ENCODE measurements at regions of chr4 and their contacts with region 1.

Region 1: GRCh38 chr4:73258686-73259570 is at the start of gene ANKRD17:
- DNase-seq: peak; percentile 89 to 91
- H3K4me3 ChIP-seq: peak within 1 kb of the TSS; percentile 61 to 94 (median 82)
- H3K27ac ChIP-seq: peak within 1 kb of the TSS; percentile 99
- H3K4me1 ChIP-seq: peaks cover 5 to 7% of the 10 kb centered on the region in 2 donors
- H3K27me3 ChIP-seq: no peaks in the 10 kb centered on the region
- CTCF ChIP-seq: peak; percentile 37 to 71 (median 71)
- POLR2A ChIP-seq: peak; percentile 78
- total RNA-seq, gene ANKRD17: 53.0 to 81.4 (median 69.2) TPM

Region 2: DNA sequence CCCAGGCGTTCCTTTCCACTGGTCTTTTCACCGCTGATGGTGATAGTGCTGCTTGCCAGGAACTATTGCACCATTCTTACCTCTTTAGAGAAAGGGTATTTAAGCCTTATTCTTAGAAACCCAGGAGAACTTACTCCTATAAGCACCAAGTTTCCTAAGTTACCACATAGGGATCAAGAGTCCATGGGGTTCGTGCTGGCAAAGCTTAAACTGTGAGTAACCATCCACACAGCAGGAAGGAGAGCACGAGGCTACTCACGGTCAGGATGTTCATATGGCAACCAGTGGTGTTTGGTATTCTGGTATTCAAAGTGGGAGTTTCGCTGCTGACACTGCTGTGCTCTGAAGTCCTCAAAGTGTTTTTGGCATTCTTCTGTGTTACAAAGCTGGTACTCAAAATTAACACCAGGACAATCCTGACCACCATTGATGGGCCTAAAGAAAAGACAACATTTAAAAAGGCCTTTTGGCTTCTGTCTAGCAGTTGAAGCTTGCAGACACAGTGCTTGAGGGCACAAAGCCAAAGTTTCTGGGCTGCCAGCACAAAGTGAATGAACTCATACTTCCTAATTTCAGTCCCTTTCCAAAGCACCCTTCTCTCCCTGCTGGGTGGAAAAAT is 946.8 kb before region 1 on chr4:
- intact Hi-C with region 1: no loop called
- DNase-seq: peak in 1 of 2 donors; percentile 60
- H3K4me3 ChIP-seq: no peak overlapping the region
- H3K27ac ChIP-seq: peak overlapping the region; percentile 61 to 67
- H3K4me1 ChIP-seq: no peaks in the 10 kb centered on the region
- H3K27me3 ChIP-seq: no peaks in the 10 kb centered on the region
- CTCF ChIP-seq: no peak
- POLR2A ChIP-seq: no peak

Region 3: GRCh38 chr4:73069338-73070073 is 189.4 kb before region 1 on chr4 and contains the start of gene COX18:
- intact Hi-C with region 1: loop called (anchors 5 kb)
- DNase-seq: peak; percentile 95 to 97
- H3K4me3 ChIP-seq: peak within 1 kb of the TSS; percentile 66 to 78 (median 70)
- H3K27ac ChIP-seq: peak within 1 kb of the TSS; percentile 86 to 94
- H3K4me1 ChIP-seq: no peaks in the 10 kb centered on the region
- H3K27me3 ChIP-seq: no peaks in the 10 kb centered on the region
- CTCF ChIP-seq: no peak
- POLR2A ChIP-seq: peak; percentile 74
- total RNA-seq, gene COX18: 18.0 to 33.4 (median 19.0) TPM

Region 4: DNA sequence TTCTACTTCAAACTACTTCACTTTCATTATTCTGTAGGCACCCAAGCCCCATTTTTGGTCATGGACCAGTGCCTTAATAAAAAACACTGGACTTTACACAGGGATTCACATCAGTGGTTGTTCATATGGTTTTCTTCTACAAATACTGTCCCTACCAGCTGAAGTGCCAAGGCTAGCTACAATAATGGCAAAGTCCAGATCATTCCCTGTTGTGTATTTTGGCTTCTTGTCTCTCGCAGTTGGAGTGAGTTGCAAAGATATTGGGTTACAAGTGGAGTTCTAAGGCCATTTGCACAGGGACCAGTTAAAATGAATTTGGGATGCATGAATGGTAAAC is 16.4 kb after region 1 on chr4:
- intact Hi-C with region 1: no loop called
- DNase-seq: no peak
- H3K4me3 ChIP-seq: no peak overlapping the region
- H3K27ac ChIP-seq: peak overlapping the region; percentile 4 to 14
- H3K4me1 ChIP-seq: no peaks in the 10 kb centered on the region
- H3K27me3 ChIP-seq: no peaks in the 10 kb centered on the region
- CTCF ChIP-seq: no peak
- POLR2A ChIP-seq: no peak

Region 5: DNA sequence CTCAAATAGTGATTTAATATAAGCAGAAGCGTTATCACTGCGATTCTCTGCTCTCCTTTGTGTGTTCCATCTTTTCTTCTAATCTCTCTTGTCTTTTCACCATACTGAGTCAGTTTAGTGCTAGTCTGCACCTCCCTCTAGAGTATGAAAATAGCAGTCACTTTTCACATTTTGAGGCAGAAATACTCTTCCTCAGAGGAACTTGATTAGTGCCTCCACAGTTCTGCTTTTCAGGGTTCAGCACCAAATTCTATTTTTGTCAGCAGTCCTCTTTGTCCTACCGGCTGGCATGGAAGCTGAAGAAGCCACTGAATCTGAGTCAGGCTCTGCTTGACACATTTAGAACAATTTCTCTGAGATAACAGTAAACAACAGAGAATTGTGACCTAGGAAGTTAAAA is 49.4 kb after region 1 on chr4:
- intact Hi-C with region 1: no loop called
- DNase-seq: no peak
- H3K4me3 ChIP-seq: no peak overlapping the region
- H3K27ac ChIP-seq: no peak overlapping the region
- H3K4me1 ChIP-seq: no peaks in the 10 kb centered on the region
- H3K27me3 ChIP-seq: no peaks in the 10 kb centered on the region
- CTCF ChIP-seq: no peak
- POLR2A ChIP-seq: no peak

Measured in breast epithelium (tissue), 4 donors.